ENCODE measurements at regions of chr2 and their contacts with region 1.

Region 1: GRCh38 chr2:203814661-203815540 is 52.7 kb upstream of the CTLA4 start:
- DNase-seq: peak; percentile 77
- H3K4me3 Mint-ChIP-seq: peak overlapping the region; percentile 54
- H3K27ac Mint-ChIP-seq: no peak overlapping the region
- H3K4me1 Mint-ChIP-seq: peaks cover 54% of the 10 kb centered on the region
- H3K27me3 Mint-ChIP-seq: no peaks in the 10 kb centered on the region

Region 2: GRCh38 chr2:202588647-202589581 is 1226.0 kb before region 1 on chr2:
- CTCF ChIA-PET with region 1: no interaction called
- intact Hi-C with region 1: loop called (anchors 10 kb)
- DNase-seq: peak; percentile 81
- H3K4me3 Mint-ChIP-seq: no peak overlapping the region
- H3K27ac Mint-ChIP-seq: no peak overlapping the region
- H3K4me1 Mint-ChIP-seq: peaks cover 11% of the 10 kb centered on the region
- H3K27me3 Mint-ChIP-seq: no peaks in the 10 kb centered on the region

Region 3: DNA sequence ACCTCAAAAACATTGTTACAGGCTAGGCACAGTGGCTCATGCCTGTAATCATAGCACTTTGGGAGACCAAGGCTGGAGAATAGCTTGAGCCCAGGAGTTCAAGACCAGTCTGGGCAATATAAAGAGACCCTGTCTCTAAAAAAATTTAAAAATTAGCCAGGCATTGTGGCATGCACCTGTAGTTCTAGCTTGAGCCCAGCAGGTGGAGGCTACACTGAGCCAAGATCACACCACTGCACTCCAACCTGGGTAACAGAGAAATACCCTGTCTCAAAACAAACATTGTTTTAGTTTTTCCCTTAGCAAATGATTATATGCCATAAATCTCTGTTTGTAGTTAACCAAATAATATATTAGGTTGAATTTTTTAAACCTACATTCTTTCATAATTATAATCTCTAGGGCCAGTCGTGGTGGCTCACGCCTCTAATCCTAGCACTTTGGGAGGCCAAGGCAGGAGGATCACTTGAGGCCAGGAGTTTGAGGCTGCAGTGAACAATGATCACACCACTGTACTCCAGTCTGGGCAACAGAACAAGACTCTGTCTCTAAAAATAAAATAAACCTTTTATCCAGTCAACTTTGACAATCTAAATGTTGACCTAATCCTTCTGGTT is 589.4 kb before region 1 on chr2:
- CTCF ChIA-PET with region 1: interaction called, 11 read pairs
- intact Hi-C with region 1: loop called (anchors 1 kb)
- DNase-seq: peak; percentile 43
- H3K4me3 Mint-ChIP-seq: no peak overlapping the region
- H3K27ac Mint-ChIP-seq: no peak overlapping the region
- H3K4me1 Mint-ChIP-seq: no peaks in the 10 kb centered on the region
- H3K27me3 Mint-ChIP-seq: peaks cover 3% of the 10 kb centered on the region

Region 4: DNA sequence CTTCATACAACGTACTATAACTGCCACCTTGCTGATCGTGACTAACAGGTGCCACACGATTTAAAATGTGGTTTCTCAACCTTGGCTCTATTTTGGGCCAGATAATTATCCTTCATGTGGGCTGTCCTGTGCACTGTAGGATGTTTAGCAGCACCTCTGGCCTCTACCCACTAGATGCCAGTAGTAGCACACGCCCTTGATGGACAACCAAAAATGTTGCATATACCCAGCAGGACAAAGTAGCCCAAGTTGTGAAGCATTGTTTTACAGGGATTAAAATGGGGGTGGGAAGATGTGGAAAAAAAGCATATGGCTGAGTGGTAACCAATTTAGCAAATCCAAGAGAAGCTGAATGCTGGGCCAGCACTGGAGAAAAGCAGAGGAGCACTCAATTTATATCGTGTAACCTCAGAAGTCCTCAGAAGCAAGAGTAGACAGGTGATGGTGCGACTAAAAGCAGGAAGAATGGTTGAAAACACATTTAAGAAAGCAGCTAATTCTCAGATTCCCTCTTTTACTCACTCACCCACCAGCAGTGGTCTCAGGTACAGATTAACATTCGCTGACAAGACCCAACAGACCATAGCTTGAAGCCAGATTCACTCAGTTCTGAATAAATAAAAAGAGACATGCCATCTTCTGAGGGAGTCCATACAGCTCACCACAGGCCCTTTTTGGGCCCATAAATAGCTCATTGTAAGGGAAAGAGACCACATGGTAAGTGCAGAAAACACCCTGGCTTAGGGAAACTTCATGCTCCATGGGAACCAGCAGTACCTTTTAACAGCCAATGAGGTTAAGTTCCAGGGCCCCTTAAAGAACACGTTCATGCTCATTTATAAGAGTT is 330.4 kb before region 1 on chr2:
- CTCF ChIA-PET with region 1: interaction called, 54 read pairs
- intact Hi-C with region 1: loop called (anchors 1 kb)
- DNase-seq: peak; percentile 68
- H3K4me3 Mint-ChIP-seq: no peak overlapping the region
- H3K27ac Mint-ChIP-seq: no peak overlapping the region
- H3K4me1 Mint-ChIP-seq: peaks cover 9% of the 10 kb centered on the region
- H3K27me3 Mint-ChIP-seq: no peaks in the 10 kb centered on the region

Region 5: GRCh38 chr2:203599509-203599908 is 215.4 kb before region 1 on chr2:
- CTCF ChIA-PET with region 1: no interaction called
- intact Hi-C with region 1: no loop called
- DNase-seq: no peak
- H3K4me3 Mint-ChIP-seq: no peak overlapping the region
- H3K27ac Mint-ChIP-seq: no peak overlapping the region
- H3K4me1 Mint-ChIP-seq: peaks cover 7% of the 10 kb centered on the region
- H3K27me3 Mint-ChIP-seq: no peaks in the 10 kb centered on the region

Region 6: GRCh38 chr2:203730076-203730729 is 84.7 kb before region 1 on chr2:
- CTCF ChIA-PET with region 1: interaction called, 13 read pairs
- intact Hi-C with region 1: loop called (anchors 1 kb)
- DNase-seq: no peak
- H3K4me3 Mint-ChIP-seq: peak overlapping the region; percentile 17
- H3K27ac Mint-ChIP-seq: peak overlapping the region; percentile 97
- H3K4me1 Mint-ChIP-seq: peaks cover 91% of the 10 kb centered on the region
- H3K27me3 Mint-ChIP-seq: no peaks in the 10 kb centered on the region

Region 7: GRCh38 chr2:203782262-203782976 is 32.5 kb before region 1 on chr2:
- CTCF ChIA-PET with region 1: interaction called, 5 read pairs
- intact Hi-C with region 1: loop called (anchors 2 kb)
- DNase-seq: peak; percentile 86
- H3K4me3 Mint-ChIP-seq: no peak overlapping the region
- H3K27ac Mint-ChIP-seq: peak overlapping the region; percentile 64
- H3K4me1 Mint-ChIP-seq: peaks cover 50% of the 10 kb centered on the region
- H3K27me3 Mint-ChIP-seq: no peaks in the 10 kb centered on the region

Region 8: DNA sequence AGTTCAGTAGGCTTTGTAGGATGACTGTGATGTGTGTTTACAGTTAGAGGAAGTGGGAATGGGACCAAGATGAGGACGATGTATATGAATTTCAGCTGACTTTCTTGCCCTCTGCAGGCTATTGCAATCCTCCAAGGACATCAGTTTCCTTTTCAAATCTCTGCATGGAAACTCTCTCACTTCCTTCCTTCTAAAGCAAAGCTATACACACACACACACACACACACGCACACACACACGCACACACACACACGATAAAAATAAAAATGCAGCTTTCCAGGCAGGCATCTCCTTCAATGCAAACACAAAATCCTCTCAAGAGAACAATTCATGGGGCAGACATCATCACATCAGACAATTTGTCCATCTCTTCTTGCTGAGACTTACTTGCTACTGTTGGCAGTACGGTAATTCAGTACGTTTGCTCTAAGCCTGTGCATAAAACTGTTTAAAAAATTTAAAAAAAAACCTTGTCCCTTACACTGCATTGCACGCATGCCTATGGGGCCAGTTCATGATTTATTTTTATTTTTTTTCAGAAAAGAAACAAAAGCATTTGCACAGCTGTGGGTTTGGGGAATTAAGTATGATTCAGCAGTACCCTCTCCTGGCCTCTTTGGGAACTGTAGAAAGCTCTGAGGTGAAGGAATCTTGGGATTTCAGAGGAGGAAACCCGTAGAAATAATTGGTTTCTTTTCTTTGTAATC is 94.5 kb after region 1 on chr2:
- CTCF ChIA-PET with region 1: interaction called, 18 read pairs
- intact Hi-C with region 1: loop called (anchors 1 kb)
- DNase-seq: peak; percentile 53
- H3K4me3 Mint-ChIP-seq: no peak overlapping the region
- H3K27ac Mint-ChIP-seq: peak overlapping the region; percentile 34
- H3K4me1 Mint-ChIP-seq: peaks cover 22% of the 10 kb centered on the region
- H3K27me3 Mint-ChIP-seq: no peaks in the 10 kb centered on the region

Region 9: GRCh38 chr2:203960811-203961210 is 145.9 kb after region 1 on chr2:
- CTCF ChIA-PET with region 1: no interaction called
- intact Hi-C with region 1: no loop called
- DNase-seq: no peak
- H3K4me3 Mint-ChIP-seq: no peak overlapping the region
- H3K27ac Mint-ChIP-seq: no peak overlapping the region
- H3K4me1 Mint-ChIP-seq: peaks cover 39% of the 10 kb centered on the region
- H3K27me3 Mint-ChIP-seq: no peaks in the 10 kb centered on the region

Region 10: GRCh38 chr2:204365811-204366210 is 550.9 kb after region 1 on chr2:
- CTCF ChIA-PET with region 1: no interaction called
- intact Hi-C with region 1: no loop called
- DNase-seq: no peak
- H3K4me3 Mint-ChIP-seq: no peak overlapping the region
- H3K27ac Mint-ChIP-seq: no peak overlapping the region
- H3K4me1 Mint-ChIP-seq: no peaks in the 10 kb centered on the region
- H3K27me3 Mint-ChIP-seq: peaks cover 14% of the 10 kb centered on the region

Region 11: DNA sequence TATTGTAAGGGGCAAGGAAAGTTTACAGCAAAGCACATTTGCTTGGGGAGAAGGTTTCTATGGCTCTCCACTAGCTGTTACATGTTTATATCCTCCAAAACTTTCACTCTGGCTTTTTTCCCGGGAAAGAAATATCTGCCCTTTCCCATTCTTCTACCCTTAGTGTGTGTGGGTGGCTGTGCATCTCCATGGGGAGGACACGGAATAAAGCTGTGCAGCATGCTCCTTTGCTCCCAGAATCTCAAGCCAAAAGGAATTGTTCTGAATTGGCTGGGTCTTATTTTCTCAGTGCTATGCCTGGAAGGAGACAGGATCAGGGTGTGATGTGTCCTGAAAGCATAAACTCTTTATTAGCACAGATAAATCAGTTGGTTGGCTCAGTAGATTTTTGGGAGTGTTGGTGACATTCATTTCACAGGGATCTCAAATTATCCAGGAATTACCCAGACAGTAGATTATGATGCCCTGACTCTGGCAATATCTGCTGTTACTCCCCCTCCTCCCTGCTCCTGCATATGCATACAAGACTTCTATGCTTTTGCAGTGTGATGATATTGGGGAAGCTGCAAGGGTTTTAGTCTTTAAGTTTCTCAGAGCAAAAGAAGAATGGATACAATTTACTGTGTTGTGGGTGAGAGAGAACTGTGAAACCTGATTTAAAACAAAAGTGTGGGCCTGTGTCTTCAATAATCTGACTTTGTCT is 793.5 kb after region 1 on chr2:
- CTCF ChIA-PET with region 1: no interaction called
- intact Hi-C with region 1: no loop called
- DNase-seq: no peak
- H3K4me3 Mint-ChIP-seq: no peak overlapping the region
- H3K27ac Mint-ChIP-seq: no peak overlapping the region
- H3K4me1 Mint-ChIP-seq: no peaks in the 10 kb centered on the region
- H3K27me3 Mint-ChIP-seq: no peaks in the 10 kb centered on the region

Measured in activated naive CD4-positive, alpha-beta T cell treated with anti-CD3 and anti-CD28 coated beads for 36 hours (primary cell).